PC-9 (cell line): ENCODE measurements at regions of chr10 and their contacts with region 1.

Region 1: DNA sequence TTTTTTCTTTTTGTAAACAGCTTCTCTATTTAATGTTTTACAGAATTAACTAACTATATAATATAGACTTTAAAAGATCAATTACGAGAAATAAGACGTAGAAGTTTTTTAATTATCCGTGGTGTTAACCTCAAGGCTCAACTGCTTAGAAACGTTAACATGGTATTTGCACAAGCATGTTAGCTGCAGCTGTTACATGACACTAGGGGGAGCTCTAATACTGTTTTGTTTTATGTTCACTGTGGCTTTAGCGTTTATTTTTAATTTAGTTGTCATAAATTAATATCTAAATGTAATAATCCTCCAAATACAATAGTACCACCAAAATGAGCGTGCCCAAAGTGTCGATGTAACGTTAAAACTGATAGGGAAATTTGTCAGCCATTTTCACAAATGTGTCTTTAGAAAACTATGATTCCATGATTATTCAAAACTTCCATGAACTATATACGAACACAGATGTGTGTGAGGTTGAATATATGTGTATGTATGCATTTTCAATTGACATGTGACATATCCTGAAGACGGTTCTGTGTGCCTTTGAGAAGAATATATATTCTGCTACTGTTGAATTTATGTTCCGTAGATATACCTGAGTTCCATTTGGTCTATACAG is 828.8 kb upstream of the MBL2 start:
- DNase-seq: peak in 1 of 2 experiments; percentile 39
- H3K4me3 ChIP-seq: no peak overlapping the region
- H3K27ac ChIP-seq: no peak overlapping the region
- H3K4me1 ChIP-seq: no peaks in the 10 kb centered on the region
- H3K27me3 ChIP-seq: no peaks in the 10 kb centered on the region
- CTCF ChIP-seq: peak; percentile 91

Region 2: GRCh38 chr10:52818019-52818418 is 783.3 kb before region 1 on chr10:
- CTCF ChIA-PET with region 1: no interaction called
- POLR2A ChIA-PET with region 1: no interaction called
- intact Hi-C with region 1: loop called (anchors 10 kb)
- DNase-seq: peak; percentile 25 to 64
- H3K4me3 ChIP-seq: no peak overlapping the region
- H3K27ac ChIP-seq: no peak overlapping the region
- H3K4me1 ChIP-seq: no peaks in the 10 kb centered on the region
- H3K27me3 ChIP-seq: no peaks in the 10 kb centered on the region
- CTCF ChIP-seq: peak; percentile 79

Region 3: DNA sequence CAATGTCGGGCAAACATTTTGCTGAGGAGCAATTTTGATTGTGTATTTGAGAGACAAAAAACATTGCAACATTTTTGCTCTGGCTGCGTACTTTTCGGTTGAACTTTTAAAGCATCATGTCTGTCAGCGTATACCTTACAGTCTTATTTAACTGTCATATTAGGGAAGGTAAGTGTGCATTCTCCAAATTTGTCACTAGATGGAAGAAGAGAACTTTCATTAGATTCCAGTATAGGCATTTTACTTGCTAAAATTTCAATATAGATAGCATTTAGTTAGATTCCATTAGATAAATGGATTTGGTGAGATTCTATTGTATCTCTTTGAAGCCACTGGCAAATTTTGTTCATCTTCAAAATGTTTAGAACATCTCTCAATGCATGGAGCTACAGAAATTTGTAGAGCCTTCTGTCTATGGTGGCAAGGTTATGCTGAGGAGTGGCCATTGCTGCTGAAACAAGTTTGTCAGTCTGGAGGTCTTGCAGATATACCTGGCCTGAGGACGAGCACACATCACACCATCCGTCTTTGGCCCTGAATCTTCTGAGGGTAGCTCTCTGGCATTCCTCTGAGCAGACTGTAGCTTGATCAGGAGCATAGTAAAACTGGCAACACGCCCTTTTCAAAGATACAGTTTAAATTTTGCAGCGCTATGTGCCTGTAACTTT is 391.3 kb before region 1 on chr10:
- CTCF ChIA-PET with region 1: no interaction called
- POLR2A ChIA-PET with region 1: no interaction called
- intact Hi-C with region 1: loop called (anchors 10 kb)
- DNase-seq: peak in 1 of 2 experiments; percentile 33
- H3K4me3 ChIP-seq: no peak overlapping the region
- H3K27ac ChIP-seq: no peak overlapping the region
- H3K4me1 ChIP-seq: no peaks in the 10 kb centered on the region
- H3K27me3 ChIP-seq: no peaks in the 10 kb centered on the region
- CTCF ChIP-seq: peak; percentile 76

Region 4: DNA sequence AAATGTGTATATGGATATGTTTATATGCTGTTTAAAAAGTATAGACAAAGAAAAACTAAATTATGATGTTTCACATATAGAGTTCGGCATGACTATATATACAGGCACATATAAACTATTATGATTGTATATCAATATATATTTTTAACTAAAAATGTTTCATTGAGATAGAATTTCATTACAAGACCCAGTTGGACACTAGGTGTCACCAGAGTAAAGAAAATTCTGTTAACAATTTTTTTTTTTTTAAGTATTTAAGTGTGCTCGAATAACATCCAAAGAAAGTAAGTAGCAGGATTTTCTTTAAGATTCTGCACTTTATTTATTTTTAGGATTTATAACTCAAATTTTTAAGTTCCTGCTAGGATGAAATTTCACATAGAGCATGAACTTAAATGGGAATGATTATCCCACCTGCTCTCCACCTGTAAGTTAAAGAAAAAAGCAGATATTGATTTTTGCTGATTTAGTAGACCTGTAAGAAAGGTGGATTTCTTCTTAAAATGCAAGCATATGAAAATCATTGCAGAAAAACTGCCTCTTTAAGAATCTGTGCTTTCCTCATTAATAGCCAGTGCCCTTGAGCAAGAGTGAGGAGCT is 238.2 kb after region 1 on chr10:
- CTCF ChIA-PET with region 1: no interaction called
- POLR2A ChIA-PET with region 1: no interaction called
- intact Hi-C with region 1: loop called (anchors 10 kb)
- DNase-seq: no peak
- H3K4me3 ChIP-seq: no peak overlapping the region
- H3K27ac ChIP-seq: no peak overlapping the region
- H3K4me1 ChIP-seq: no peaks in the 10 kb centered on the region
- H3K27me3 ChIP-seq: no peaks in the 10 kb centered on the region
- CTCF ChIP-seq: peak; percentile 69

Region 5: GRCh38 chr10:55263327-55263726 is 1662.0 kb after region 1 on chr10:
- CTCF ChIA-PET with region 1: interaction called, 3 read pairs
- POLR2A ChIA-PET with region 1: no interaction called
- intact Hi-C with region 1: loop called (anchors 5 kb)
- DNase-seq: no peak
- H3K4me3 ChIP-seq: no peak overlapping the region
- H3K27ac ChIP-seq: no peak overlapping the region
- H3K4me1 ChIP-seq: no peaks in the 10 kb centered on the region
- H3K27me3 ChIP-seq: no peaks in the 10 kb centered on the region
- CTCF ChIP-seq: no peak